ENCODE measurements at regions of chr7 and their contacts with region 1.

Region 1: GRCh38 chr7:149670288-149670687 is 103.1 kb downstream of the ZNF467 start:
- DNase-seq: no peak
- H3K4me3 ChIP-seq: no peak overlapping the region
- H3K27ac ChIP-seq: no peak overlapping the region
- H3K4me1 ChIP-seq: no peaks in the 10 kb centered on the region
- H3K27me3 ChIP-seq: no peaks in the 10 kb centered on the region
- CTCF ChIP-seq: no peak
- POLR2A ChIP-seq: no peak

Region 2: DNA sequence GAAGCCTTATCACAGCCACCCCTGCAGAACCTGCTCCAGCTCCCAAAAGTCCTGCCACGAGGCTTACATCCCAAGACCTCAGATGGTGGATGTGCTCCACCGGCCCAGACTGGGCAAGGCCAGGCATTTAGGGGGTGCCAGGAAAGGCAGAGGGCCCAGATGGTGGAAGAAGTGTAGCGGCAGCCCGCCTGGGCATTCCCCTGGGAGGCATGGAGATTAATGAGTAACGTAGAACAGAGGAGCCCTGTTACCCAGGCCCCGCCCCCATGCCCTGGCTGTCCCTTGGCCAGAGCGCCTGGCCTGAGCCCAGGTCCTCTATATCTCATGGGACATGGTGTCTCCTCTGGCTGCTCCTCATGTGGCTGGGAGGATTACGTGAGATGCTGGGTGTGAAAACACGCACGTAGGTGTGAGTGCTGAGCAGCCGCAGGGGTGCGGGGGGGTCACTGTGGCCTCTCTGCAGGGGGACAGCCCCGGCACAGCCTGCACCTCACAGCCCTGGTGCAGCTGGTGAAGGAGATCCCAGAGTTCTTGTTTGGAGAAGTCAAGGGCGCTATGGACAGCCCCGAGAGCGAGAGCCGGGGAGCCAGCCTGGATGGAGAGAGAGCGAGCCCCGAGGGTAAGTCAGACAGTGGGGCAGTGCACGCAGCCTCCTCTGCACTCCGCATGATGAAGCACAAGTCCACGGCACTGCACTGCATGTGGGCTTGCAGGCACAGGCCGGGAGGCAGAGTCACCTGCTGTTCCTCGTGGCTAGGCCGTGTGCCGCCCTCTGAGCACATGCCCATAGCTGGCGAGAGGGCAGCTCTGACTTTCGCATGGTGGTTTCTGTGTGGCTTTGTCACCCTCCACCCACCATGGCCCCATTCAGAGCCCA is 50.3 kb after region 1 on chr7:
- intact Hi-C with region 1: loop called (anchors 10 kb)
- DNase-seq: peak in 1 of 2 donors; percentile 69
- H3K4me3 ChIP-seq: no peak overlapping the region
- H3K27ac ChIP-seq: no peak overlapping the region
- H3K4me1 ChIP-seq: peaks cover 5 to 8% of the 10 kb centered on the region in 2 donors
- H3K27me3 ChIP-seq: no peaks in the 10 kb centered on the region
- CTCF ChIP-seq: no peak
- POLR2A ChIP-seq: no peak